ENCODE measurements at regions of chr3 and their contacts with region 1.

Region 1: GRCh38 chr3:7381741-7382140 is 520.8 kb downstream of the GRM7 start:
- DNase-seq: no peak
- ATAC-seq: no peak
- H3K4me3 ChIP-seq: no peak overlapping the region
- H3K27ac ChIP-seq: no peak overlapping the region
- H3K4me1 ChIP-seq: no peaks in the 10 kb centered on the region
- H3K27me3 ChIP-seq: no peaks in the 10 kb centered on the region
- CTCF ChIP-seq: no peak
- EP300 ChIP-seq: no peak
- POLR2A ChIP-seq: no peak
- RAD21 ChIP-seq: no peak

Region 2: GRCh38 chr3:7190095-7190494 is 191.6 kb before region 1 on chr3:
- CTCF ChIA-PET with region 1: no interaction called
- POLR2A ChIA-PET with region 1: no interaction called
- in situ Hi-C with region 1: no loop called
- intact Hi-C with region 1: no loop called
- DNase-seq: no peak
- ATAC-seq: no peak
- H3K4me3 ChIP-seq: no peak overlapping the region
- H3K27ac ChIP-seq: no peak overlapping the region
- H3K4me1 ChIP-seq: no peaks in the 10 kb centered on the region
- H3K27me3 ChIP-seq: no peaks in the 10 kb centered on the region
- CTCF ChIP-seq: no peak
- EP300 ChIP-seq: no peak
- POLR2A ChIP-seq: no peak
- RAD21 ChIP-seq: no peak

Region 3: DNA sequence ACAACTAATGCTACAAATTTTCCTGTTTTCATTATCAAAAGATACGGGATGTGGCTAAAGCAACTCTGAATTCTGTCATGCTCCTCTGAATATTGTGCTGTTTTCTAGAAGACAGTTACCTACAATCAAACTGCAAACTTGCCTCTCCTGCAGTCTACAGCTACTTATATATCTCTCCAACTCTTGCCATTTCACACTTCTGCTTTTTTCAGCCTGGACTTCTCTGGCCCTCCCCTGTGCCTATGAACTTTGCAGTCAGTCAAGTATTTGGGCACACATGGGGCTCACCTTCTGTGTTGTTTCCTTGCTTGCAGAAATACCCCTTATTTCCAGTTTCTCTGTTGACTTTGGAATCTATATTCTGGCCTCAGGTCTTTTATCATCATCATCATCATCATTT is 54.8 kb after region 1 on chr3:
- CTCF ChIA-PET with region 1: no interaction called
- POLR2A ChIA-PET with region 1: no interaction called
- in situ Hi-C with region 1: no loop called
- intact Hi-C with region 1: no loop called
- DNase-seq: no peak
- ATAC-seq: no peak
- H3K4me3 ChIP-seq: no peak overlapping the region
- H3K27ac ChIP-seq: no peak overlapping the region
- H3K4me1 ChIP-seq: no peaks in the 10 kb centered on the region
- H3K27me3 ChIP-seq: no peaks in the 10 kb centered on the region
- CTCF ChIP-seq: no peak
- EP300 ChIP-seq: no peak
- POLR2A ChIP-seq: no peak
- RAD21 ChIP-seq: no peak

Region 4: GRCh38 chr3:7447197-7447769 is 65.5 kb after region 1 on chr3:
- CTCF ChIA-PET with region 1: no interaction called
- POLR2A ChIA-PET with region 1: no interaction called
- in situ Hi-C with region 1: no loop called
- intact Hi-C with region 1: loop called (anchors 2 kb)
- DNase-seq: no peak
- ATAC-seq: no peak
- H3K4me3 ChIP-seq: no peak overlapping the region
- H3K27ac ChIP-seq: no peak overlapping the region
- H3K4me1 ChIP-seq: no peaks in the 10 kb centered on the region
- H3K27me3 ChIP-seq: no peaks in the 10 kb centered on the region
- CTCF ChIP-seq: no peak
- EP300 ChIP-seq: no peak
- POLR2A ChIP-seq: no peak
- RAD21 ChIP-seq: no peak

Measured in HepG2 (cell line).